HAP-1 (cell line): ENCODE measurements at regions of chr4 and their contacts with region 1.

Region 1: GRCh38 chr4:48093949-48094550 is 40.0 kb downstream of the TXK start:
- DNase-seq: peak; percentile 39 to 42
- H3K4me3 ChIP-seq: no peak overlapping the region
- H3K4me1 ChIP-seq: peaks cover 9% of the 10 kb centered on the region
- H3K27me3 ChIP-seq: no peaks in the 10 kb centered on the region; the same call in 1 of the 2 replicates

Region 2: GRCh38 chr4:47926639-47927258 is 167.3 kb before region 1 on chr4:
- in situ Hi-C with region 1: loop called (anchors 25 kb)
- DNase-seq: peak; percentile 65 to 82
- H3K4me3 ChIP-seq: no peak overlapping the region
- H3K4me1 ChIP-seq: no peaks in the 10 kb centered on the region
- H3K27me3 ChIP-seq: peaks cover 12% of the 10 kb centered on the region; the same call in 1 of the 2 replicates

Region 3: DNA sequence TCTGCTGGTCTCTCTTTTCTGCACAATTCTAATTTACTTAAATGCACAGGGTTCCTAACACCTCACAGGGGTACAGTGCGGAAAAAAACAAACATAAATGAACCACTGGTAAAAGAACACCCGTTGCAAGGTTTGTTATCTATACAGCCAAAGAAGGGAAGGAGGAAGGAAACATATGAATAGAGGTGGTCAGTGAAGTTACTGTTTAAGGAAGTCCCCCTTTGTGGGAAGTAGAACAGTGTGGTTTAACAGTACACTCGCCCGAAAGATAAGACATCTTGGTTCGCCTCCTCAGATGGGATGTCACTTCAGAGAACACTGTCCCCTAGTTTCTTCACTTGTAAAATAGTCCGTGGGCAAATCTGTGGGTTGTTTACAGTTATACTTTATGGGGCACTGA is 118.1 kb after region 1 on chr4:
- in situ Hi-C with region 1: no loop called
- DNase-seq: no peak
- H3K4me3 ChIP-seq: no peak overlapping the region
- H3K4me1 ChIP-seq: no peaks in the 10 kb centered on the region
- H3K27me3 ChIP-seq: no peaks in the 10 kb centered on the region